ENCODE measurements at regions of chr1 and their contacts with region 1.

Region 1: DNA sequence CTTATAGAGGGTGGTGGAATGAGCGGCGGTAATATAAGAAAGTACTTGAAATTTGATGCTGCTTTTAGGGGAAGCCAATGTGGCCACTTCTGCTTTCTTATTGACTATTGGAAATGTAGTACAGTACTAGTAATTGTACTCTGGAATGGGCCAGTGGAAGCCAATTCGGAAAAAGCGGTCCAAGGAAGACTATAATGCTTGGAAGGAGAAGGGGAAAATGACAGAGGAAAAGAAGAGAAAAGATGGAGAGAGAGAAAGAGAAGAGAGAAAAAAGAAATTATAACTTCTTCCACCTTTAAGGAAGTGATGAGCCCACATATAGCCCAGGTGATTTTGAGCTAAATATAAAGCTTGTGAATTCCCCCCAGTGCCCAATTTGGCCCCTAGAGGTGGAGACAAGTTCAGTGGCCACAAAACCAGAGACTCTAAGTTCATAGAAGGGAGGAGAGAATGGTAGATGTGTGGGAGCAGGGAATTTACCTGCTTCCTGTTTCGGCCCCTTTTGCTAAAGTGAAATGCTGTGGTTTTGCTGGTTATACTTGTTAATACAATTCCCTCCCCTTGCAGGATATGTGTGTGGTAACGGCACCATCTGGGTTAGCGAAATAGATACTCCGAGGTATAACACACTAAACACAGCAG is 35.7 kb upstream of the DUSP10 start:
- DNase-seq: peak in 32 of 35 experiments; percentile 8 to 85 (median 38)
- ATAC-seq: peak; percentile 60 to 82 (median 68)
- H3K4me3 ChIP-seq: peak overlapping the region in 1 of 2 donors; percentile 18
- H3K4me3 Mint-ChIP-seq: peak overlapping the region in 2 of 3 donors; percentile 37 to 60
- H3K27ac ChIP-seq: peak overlapping the region; percentile 77
- H3K27ac Mint-ChIP-seq: peak overlapping the region; percentile 81 to 90
- H3K4me1 ChIP-seq: peaks cover 41 to 49% of the 10 kb centered on the region in 2 experiments
- H3K4me1 Mint-ChIP-seq: peaks cover 50 to 68% (median 56%) of the 10 kb centered on the region in 3 donors
- H3K27me3 ChIP-seq: no peaks in the 10 kb centered on the region
- H3K27me3 Mint-ChIP-seq: no peaks in the 10 kb centered on the region

Region 2: DNA sequence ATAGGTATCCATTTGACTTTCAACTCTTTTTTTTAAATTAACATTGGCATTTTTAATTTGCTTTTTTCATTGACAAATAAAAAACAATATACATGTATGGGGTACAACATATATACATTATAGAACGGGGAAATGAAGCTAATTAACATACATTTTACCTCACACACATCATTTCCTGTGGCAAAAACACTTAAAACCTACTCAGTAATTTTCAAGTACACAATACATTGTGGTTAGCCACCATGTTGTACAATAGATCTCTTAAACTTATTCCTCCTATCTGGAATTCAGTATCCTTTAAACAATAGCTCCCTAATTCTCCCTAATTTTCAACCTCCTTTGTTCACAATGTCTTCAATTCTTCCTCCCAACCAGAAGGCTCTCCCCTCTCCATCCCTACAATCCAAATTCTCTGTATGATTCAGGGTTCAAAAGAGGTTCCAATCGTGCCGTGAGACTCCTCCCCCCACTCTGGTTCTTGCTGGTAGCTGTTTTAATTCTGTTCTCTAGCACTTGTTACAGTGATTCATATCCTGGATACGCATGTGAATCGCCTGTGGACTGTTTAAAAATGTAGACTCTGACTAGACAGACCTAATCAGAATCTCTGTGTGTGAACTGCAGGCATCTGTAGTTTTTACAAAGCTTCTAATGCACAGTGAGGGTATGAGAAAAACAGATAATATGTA is 51.9 kb after region 1 on chr1:
- CTCF ChIA-PET with region 1: interaction called in 1 of 2 experiments, 8 read pairs
- POLR2A ChIA-PET with region 1: interaction called in 1 of 2 experiments, 11 read pairs
- DNase-seq: peak in 25 of 35 experiments; percentile 5 to 70 (median 27)
- ATAC-seq: peak; percentile 72 to 91 (median 84)
- H3K4me3 ChIP-seq: no peak overlapping the region
- H3K4me3 Mint-ChIP-seq: peak overlapping the region; percentile 41 to 73 (median 56)
- H3K27ac ChIP-seq: peak overlapping the region; percentile 81
- H3K27ac Mint-ChIP-seq: peak overlapping the region; percentile 85 to 95
- H3K4me1 ChIP-seq: peaks cover 9 to 21% of the 10 kb centered on the region in 2 experiments
- H3K4me1 Mint-ChIP-seq: peaks cover 39 to 63% (median 45%) of the 10 kb centered on the region in 3 donors
- H3K27me3 ChIP-seq: no peaks in the 10 kb centered on the region
- H3K27me3 Mint-ChIP-seq: no peaks in the 10 kb centered on the region

Region 3: DNA sequence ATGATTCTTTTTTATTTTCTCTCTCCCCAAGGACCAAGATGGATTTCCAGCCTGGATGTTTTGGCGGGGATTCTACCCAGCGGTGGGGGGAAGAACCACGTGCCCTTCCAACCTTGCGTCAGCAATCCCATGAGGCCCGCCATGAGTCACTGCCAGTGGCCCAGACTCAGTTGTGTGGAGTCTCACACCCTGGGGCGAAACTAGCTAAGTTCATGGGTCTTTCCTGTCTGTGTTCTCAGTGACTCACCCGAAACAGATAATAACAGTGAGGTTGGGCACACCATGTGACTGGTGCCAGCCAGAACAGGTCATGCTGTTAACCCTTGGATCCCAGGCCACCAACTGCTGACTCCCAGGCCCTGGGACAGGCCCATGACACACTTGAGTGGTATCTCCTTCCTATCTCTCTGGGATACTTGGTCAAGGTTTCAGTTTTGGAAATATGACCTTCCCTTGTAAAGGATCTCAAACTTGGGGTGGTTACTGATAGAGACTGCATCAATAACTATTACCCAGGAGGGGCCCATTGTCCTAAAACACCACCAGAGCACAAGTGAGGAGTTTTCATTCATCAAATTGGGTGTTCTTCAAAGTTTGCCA is 62.3 kb after region 1 on chr1:
- CTCF ChIA-PET with region 1: no interaction called
- POLR2A ChIA-PET with region 1: no interaction called
- DNase-seq: peak in 34 of 35 experiments; percentile 9 to 76 (median 52)
- ATAC-seq: peak; percentile 72 to 91 (median 82)
- H3K4me3 ChIP-seq: no peak overlapping the region
- H3K4me3 Mint-ChIP-seq: no peak overlapping the region
- H3K27ac ChIP-seq: peak overlapping the region; percentile 39
- H3K27ac Mint-ChIP-seq: peak overlapping the region; percentile 69 to 82
- H3K4me1 ChIP-seq: peaks cover 6 to 21% of the 10 kb centered on the region in 2 experiments
- H3K4me1 Mint-ChIP-seq: peaks cover 15 to 40% (median 36%) of the 10 kb centered on the region in 3 donors
- H3K27me3 ChIP-seq: no peaks in the 10 kb centered on the region
- H3K27me3 Mint-ChIP-seq: peaks cover 0 to 3% of the 10 kb centered on the region in 2 donors